GM12878 (cell line): ENCODE measurements at regions of chr2 and their contacts with region 1.

Region 1: DNA sequence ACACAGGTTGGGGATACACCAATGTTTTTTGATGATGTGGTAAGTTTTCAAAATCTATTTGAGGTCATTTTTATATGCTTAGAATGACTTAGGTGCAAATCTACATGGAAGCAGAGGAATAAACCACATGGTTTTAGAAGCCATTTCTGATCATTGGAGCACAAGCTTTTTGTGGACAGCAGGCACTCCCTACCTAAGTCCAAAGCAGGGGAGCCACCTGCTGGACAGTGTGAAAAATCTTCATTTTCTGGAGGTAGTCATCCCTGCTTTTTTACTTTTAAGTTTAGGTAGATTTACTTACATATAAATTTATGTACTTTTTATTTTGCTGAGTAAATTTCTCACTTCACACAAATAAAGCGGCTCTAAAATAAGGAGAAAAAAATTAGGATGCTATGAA is 323.2 kb downstream of the PLCL1 start:
- DNase-seq: peak; percentile 32
- ATAC-seq: peak; percentile 94
- H3K4me3 ChIP-seq: no peak overlapping the region
- H3K27ac ChIP-seq: no peak overlapping the region
- H3K4me1 ChIP-seq: no peaks in the 10 kb centered on the region
- H3K27me3 ChIP-seq: no peaks in the 10 kb centered on the region; a peak in 1 of 4 replicates
- CTCF ChIP-seq: peak; percentile 56 to 88 (median 69)
- EP300 ChIP-seq: no peak
- POLR2A ChIP-seq: no peak
- RAD21 ChIP-seq: peak; percentile 95

Region 2: GRCh38 chr2:197838036-197838435 is 289.6 kb before region 1 on chr2:
- CTCF ChIA-PET with region 1: interaction called, 30 read pairs
- POLR2A ChIA-PET with region 1: no interaction called
- RAD21 ChIA-PET with region 1: interaction called, 21 read pairs
- SMC1A ChIA-PET with region 1: interaction called, 26 read pairs
- in situ Hi-C with region 1: no loop called
- intact Hi-C with region 1: no loop called
- DNase-seq: peak; percentile 30
- ATAC-seq: peak; percentile 97
- H3K4me3 ChIP-seq: no peak overlapping the region
- H3K27ac ChIP-seq: no peak overlapping the region
- H3K4me1 ChIP-seq: no peaks in the 10 kb centered on the region
- H3K27me3 ChIP-seq: no peaks in the 10 kb centered on the region
- CTCF ChIP-seq: no peak
- EP300 ChIP-seq: no peak
- POLR2A ChIP-seq: no peak
- RAD21 ChIP-seq: no peak

Region 3: DNA sequence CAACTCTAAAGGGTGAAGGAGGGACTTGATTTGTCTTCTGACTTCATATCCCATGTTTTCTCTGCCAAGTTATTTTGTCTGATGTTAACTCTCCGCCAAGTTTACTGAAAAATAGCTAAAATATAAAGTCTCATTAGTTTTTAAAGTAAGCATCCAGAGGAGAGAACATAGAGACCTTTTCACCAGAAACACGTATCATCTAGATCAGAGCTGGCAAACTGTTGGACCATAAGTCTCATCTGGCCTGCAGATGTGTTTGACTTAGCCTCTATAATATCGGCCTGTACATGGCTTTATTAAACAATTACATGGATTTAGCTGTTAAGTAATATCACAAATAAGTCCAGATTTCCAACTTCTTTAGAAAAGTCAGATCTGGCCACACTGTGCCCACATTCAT is 140.7 kb before region 1 on chr2:
- CTCF ChIA-PET with region 1: interaction called, 12 read pairs
- POLR2A ChIA-PET with region 1: no interaction called
- RAD21 ChIA-PET with region 1: interaction called, 10 read pairs
- SMC1A ChIA-PET with region 1: interaction called, 14 read pairs
- in situ Hi-C with region 1: no loop called
- intact Hi-C with region 1: loop called (anchors 5 kb)
- DNase-seq: no peak
- ATAC-seq: no peak
- H3K4me3 ChIP-seq: no peak overlapping the region
- H3K27ac ChIP-seq: no peak overlapping the region
- H3K4me1 ChIP-seq: peaks cover 5% of the 10 kb centered on the region
- H3K27me3 ChIP-seq: no peaks in the 10 kb centered on the region
- CTCF ChIP-seq: no peak
- EP300 ChIP-seq: no peak
- POLR2A ChIP-seq: no peak
- RAD21 ChIP-seq: no peak

Region 4: DNA sequence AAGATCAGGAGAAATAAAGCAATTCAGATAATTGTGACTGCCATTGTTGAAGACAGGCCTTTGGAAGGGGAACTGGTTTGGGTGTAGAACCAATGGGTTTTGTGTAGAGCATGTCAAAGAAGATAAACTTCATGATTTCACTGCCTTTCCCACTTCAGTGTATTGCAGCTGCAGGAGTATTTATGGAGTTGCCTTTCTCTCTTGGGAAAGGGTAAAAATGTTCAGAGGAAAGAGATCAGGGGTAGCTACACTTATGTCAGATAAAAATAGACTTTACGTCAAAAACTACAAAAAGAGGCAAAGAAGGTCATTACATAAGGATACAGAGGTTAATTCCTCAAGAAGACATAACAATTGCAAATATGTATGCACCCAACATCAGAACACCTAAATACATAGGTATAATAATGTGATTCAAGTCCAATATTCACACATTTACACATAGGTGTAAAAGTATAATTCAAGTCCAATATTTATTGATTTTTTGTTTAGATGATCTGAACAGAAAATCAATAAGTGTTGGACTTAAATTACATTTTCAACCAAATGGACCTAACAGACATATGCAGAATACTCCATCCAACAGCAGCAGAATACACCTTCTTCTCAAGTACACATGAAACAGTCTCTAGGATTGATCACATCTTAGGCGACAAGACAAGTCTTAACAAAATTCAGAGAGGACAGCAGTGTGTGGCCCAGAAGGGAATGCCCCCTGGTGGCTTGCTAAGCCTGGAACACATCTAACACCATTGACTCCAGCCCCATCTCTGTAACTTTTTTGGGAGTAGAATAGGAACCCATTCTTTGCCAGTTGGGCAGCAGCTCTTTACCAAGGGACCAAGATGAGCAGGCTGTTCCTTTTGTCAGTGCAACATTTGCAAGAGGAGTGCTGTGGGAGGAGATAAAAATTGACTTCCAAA is 73.6 kb before region 1 on chr2:
- CTCF ChIA-PET with region 1: interaction called, 13 read pairs
- POLR2A ChIA-PET with region 1: no interaction called
- RAD21 ChIA-PET with region 1: interaction called, 3 read pairs
- SMC1A ChIA-PET with region 1: interaction called, 11 read pairs
- in situ Hi-C with region 1: no loop called
- intact Hi-C with region 1: loop called (anchors 2 kb)
- DNase-seq: no peak
- ATAC-seq: peak; percentile 97
- H3K4me3 ChIP-seq: no peak overlapping the region
- H3K27ac ChIP-seq: no peak overlapping the region
- H3K4me1 ChIP-seq: no peaks in the 10 kb centered on the region
- H3K27me3 ChIP-seq: no peaks in the 10 kb centered on the region
- CTCF ChIP-seq: peak; percentile 47 to 65 (median 59)
- EP300 ChIP-seq: no peak
- POLR2A ChIP-seq: no peak
- RAD21 ChIP-seq: peak; percentile 80

Region 5: GRCh38 chr2:198116756-198117155 is 10.9 kb before region 1 on chr2:
- CTCF ChIA-PET with region 1: interaction called, 21 read pairs
- POLR2A ChIA-PET with region 1: no interaction called
- RAD21 ChIA-PET with region 1: interaction called, 3 read pairs
- SMC1A ChIA-PET with region 1: interaction called, 11 read pairs
- in situ Hi-C with region 1: no loop called
- intact Hi-C with region 1: no loop called
- DNase-seq: no peak
- ATAC-seq: no peak
- H3K4me3 ChIP-seq: no peak overlapping the region
- H3K27ac ChIP-seq: no peak overlapping the region
- H3K4me1 ChIP-seq: no peaks in the 10 kb centered on the region
- H3K27me3 ChIP-seq: no peaks in the 10 kb centered on the region
- CTCF ChIP-seq: no peak
- EP300 ChIP-seq: no peak
- POLR2A ChIP-seq: no peak
- RAD21 ChIP-seq: no peak

Region 6: DNA sequence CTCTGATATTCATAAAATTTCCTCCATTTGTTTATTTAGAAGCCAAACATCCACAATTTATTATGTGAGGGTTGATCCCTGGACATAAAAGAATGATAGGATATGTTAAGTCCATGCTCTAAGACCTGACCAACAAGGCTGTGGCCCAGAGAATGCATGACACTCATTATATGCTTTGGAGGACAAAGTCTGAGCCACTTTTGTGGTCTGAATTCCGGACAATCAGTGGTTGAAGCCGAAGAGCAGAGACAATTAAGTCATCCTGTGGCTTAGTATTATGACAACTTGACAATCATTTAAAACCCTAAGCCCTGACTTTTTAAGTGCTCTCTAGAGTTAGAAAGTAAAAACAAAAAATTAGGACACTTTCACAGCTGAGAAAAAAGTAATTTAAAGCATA is 160.1 kb after region 1 on chr2:
- CTCF ChIA-PET with region 1: no interaction called
- POLR2A ChIA-PET with region 1: no interaction called
- RAD21 ChIA-PET with region 1: no interaction called
- SMC1A ChIA-PET with region 1: no interaction called
- in situ Hi-C with region 1: no loop called
- intact Hi-C with region 1: no loop called
- DNase-seq: no peak
- ATAC-seq: no peak
- H3K4me3 ChIP-seq: no peak overlapping the region
- H3K27ac ChIP-seq: no peak overlapping the region
- H3K4me1 ChIP-seq: no peaks in the 10 kb centered on the region
- H3K27me3 ChIP-seq: peaks cover 0 to 2% of the 10 kb centered on the region in 2 experiments; a peak in 3 of 4 replicates
- CTCF ChIP-seq: no peak
- EP300 ChIP-seq: no peak
- POLR2A ChIP-seq: no peak
- RAD21 ChIP-seq: no peak